ENCODE measurements at regions of chr13 and their contacts with region 1.

Region 1: DNA sequence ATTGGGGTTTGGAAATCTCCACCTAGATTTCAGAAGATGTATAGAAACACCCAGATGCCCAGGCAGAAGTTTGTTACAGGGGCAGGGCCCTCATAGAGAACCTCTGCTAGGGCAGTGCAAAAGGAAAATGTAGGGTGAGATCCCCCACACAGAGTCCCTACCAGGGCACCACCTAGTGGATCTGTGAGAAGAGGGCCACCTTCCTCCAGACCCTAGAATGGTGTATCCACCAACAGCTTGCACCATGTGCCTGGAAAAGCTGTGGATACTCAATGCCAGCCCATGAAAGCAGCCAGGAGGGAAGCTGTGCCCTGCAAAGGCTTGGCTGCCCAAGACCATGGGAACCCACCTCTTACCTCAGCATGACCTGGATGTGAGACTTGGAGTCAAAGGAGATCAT is 32.5 kb downstream of the TRPC4 start:
- DNase-seq: peak; percentile 37
- H3K4me3 ChIP-seq: no peak overlapping the region
- H3K27ac ChIP-seq: no peak overlapping the region
- H3K4me1 ChIP-seq: peaks cover 41% of the 10 kb centered on the region
- CTCF ChIP-seq: no peak; the same call in 1 of the 2 replicates

Region 2: DNA sequence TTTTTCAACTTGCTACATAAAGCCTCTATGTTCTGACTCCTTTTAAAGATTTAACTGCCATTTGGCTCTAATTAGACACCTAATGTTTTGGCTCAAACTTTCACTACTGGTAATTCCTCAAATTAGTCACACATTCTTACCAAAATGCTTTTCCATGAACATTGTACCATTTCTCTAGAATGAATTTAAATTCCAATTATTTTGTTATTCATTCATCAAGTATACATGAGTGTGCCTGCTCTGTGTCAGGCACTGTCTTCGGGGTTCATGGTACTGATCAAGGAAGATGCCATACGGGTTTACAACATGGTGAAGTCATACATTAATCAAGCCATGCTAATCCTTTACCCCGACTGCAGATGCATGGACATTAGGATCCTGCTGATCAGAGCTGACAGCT is 169.4 kb before region 1 on chr13:
- CTCF ChIA-PET with region 1: no interaction called
- POLR2A ChIA-PET with region 1: no interaction called
- intact Hi-C with region 1: no loop called
- DNase-seq: no peak
- H3K4me3 ChIP-seq: no peak overlapping the region
- H3K27ac ChIP-seq: no peak overlapping the region
- H3K4me1 ChIP-seq: no peaks in the 10 kb centered on the region
- CTCF ChIP-seq: no peak

Region 3: DNA sequence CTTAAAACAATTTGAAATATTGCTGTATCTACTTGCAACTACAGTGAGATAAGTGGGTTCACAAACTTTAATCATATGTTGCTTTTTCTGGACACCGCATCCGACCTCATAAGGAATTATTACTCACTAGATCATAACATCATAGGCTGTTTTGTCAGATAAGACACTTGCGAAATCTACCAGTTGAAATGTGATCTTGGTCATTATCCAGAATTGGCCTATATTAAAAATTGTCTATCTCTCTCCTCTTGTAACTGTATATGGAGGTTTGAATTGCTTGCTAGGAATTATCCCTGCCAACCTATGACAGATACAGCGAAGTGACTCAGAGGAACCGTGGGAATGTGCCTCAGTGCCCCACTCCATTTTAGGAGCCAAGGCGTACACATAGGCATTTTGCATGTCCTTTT is 121.5 kb before region 1 on chr13:
- CTCF ChIA-PET with region 1: no interaction called
- POLR2A ChIA-PET with region 1: no interaction called
- intact Hi-C with region 1: no loop called
- DNase-seq: no peak
- H3K4me3 ChIP-seq: no peak overlapping the region
- H3K27ac ChIP-seq: no peak overlapping the region
- H3K4me1 ChIP-seq: peaks cover 5% of the 10 kb centered on the region
- CTCF ChIP-seq: no peak

Region 4: GRCh38 chr13:37775871-37776270 is 61.2 kb before region 1 on chr13:
- CTCF ChIA-PET with region 1: interaction called, 4 read pairs
- POLR2A ChIA-PET with region 1: interaction called, 8 read pairs
- intact Hi-C with region 1: loop called (anchors 5 kb)
- DNase-seq: no peak
- H3K4me3 ChIP-seq: no peak overlapping the region
- H3K27ac ChIP-seq: no peak overlapping the region
- H3K4me1 ChIP-seq: peaks cover 2% of the 10 kb centered on the region
- CTCF ChIP-seq: no peak

Region 5: GRCh38 chr13:37788346-37788745 is 48.8 kb before region 1 on chr13:
- CTCF ChIA-PET with region 1: no interaction called
- POLR2A ChIA-PET with region 1: interaction called, 15 read pairs
- intact Hi-C with region 1: no loop called
- DNase-seq: no peak
- H3K4me3 ChIP-seq: no peak overlapping the region
- H3K27ac ChIP-seq: no peak overlapping the region
- H3K4me1 ChIP-seq: peaks cover 3% of the 10 kb centered on the region
- CTCF ChIP-seq: no peak

Region 6: DNA sequence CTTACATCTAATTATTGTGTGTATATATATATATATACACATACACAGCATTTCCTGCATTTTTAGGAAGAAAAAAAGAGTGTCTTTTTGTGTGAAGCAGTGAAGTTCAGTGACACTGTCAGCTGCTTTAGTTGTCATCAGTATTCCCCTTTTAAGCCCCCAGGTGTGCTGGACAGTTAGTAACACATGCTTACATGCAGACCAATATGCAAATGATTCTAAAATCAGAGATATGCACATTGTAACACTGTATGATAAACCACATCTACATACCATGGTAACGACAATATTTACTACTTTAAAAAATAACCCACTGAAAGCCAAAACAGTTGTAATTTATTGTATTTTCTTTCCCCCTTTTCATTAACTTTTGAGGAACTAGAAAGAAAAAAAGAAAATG is 1749.1 kb after region 1 on chr13:
- CTCF ChIA-PET with region 1: no interaction called
- POLR2A ChIA-PET with region 1: no interaction called
- intact Hi-C with region 1: loop called (anchors 5 kb)
- DNase-seq: peak; percentile 91
- H3K4me3 ChIP-seq: peak overlapping the region; percentile 56
- H3K27ac ChIP-seq: peak overlapping the region; percentile 99
- H3K4me1 ChIP-seq: peaks cover 99% of the 10 kb centered on the region
- CTCF ChIP-seq: no peak